ENCODE measurements at regions of chr9 and their contacts with region 1.

Region 1: GRCh38 chr9:121278535-121279261 is 10.7 kb downstream of the GSN start:
- DNase-seq: peak; percentile 67 to 85 (median 79)
- ATAC-seq: peak; percentile 59 to 64
- H3K4me3 ChIP-seq: no peak overlapping the region
- H3K27ac ChIP-seq: peak overlapping the region; percentile 81
- H3K4me1 ChIP-seq: peaks cover 38% of the 10 kb centered on the region
- H3K27me3 ChIP-seq: no peaks in the 10 kb centered on the region

Region 2: GRCh38 chr9:120830151-120830550 is 448.5 kb before region 1 on chr9:
- intact Hi-C with region 1: no loop called
- DNase-seq: no peak
- ATAC-seq: no peak
- H3K4me3 ChIP-seq: no peak overlapping the region
- H3K27ac ChIP-seq: no peak overlapping the region
- H3K4me1 ChIP-seq: no peaks in the 10 kb centered on the region
- H3K27me3 ChIP-seq: no peaks in the 10 kb centered on the region

Region 3: GRCh38 chr9:121321016-121321503 is 42.4 kb after region 1 on chr9:
- intact Hi-C with region 1: loop called in 2 of 4 experiments (anchors 2 to 5 kb)
- DNase-seq: peak in 2 of 3 donors; percentile 51 to 59
- ATAC-seq: peak in 1 of 2 donors; percentile 2
- H3K4me3 ChIP-seq: no peak overlapping the region
- H3K27ac ChIP-seq: peak overlapping the region; percentile 47
- H3K4me1 ChIP-seq: peaks cover 12% of the 10 kb centered on the region
- H3K27me3 ChIP-seq: no peaks in the 10 kb centered on the region

Region 4: DNA sequence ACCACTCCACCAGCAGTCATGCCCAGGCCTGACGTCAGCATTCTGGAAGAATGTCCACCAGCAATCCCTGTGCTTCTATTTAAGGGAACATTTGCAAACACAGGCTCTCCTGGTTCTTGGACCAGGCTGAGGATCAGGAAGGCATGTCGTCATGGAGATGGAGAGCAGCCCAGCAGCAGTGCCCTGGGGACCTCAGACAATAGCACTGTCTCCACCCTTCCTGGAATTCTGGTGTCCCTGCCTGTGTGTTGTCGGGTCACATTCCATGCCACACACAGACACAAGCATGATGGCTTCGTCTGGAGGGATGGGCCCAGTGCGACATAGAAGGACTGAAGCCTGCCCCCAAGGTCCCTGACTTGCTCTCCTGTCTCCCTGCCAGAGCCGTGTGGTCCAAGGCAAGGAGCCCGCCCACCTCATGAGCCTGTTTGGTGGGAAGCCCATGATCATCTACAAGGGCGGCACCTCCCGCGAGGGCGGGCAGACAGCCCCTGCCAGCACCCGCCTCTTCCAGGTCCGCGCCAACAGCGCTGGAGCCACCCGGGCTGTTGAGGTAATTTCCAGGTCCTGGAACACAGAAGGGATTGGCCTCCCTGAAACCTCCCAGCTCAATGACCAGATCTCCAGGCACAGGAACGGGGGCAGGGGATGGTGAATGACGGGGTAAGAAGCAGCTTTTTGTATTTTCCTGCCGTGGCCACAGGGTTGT is 47.6 kb after region 1 on chr9:
- intact Hi-C with region 1: loop called in 2 of 4 experiments (anchors 2 to 5 kb)
- DNase-seq: peak; percentile 94 to 96 (median 95)
- ATAC-seq: peak; percentile 90 to 91
- H3K4me3 ChIP-seq: no peak overlapping the region
- H3K27ac ChIP-seq: peak overlapping the region; percentile 94
- H3K4me1 ChIP-seq: peaks cover 14% of the 10 kb centered on the region
- H3K27me3 ChIP-seq: no peaks in the 10 kb centered on the region

Region 5: DNA sequence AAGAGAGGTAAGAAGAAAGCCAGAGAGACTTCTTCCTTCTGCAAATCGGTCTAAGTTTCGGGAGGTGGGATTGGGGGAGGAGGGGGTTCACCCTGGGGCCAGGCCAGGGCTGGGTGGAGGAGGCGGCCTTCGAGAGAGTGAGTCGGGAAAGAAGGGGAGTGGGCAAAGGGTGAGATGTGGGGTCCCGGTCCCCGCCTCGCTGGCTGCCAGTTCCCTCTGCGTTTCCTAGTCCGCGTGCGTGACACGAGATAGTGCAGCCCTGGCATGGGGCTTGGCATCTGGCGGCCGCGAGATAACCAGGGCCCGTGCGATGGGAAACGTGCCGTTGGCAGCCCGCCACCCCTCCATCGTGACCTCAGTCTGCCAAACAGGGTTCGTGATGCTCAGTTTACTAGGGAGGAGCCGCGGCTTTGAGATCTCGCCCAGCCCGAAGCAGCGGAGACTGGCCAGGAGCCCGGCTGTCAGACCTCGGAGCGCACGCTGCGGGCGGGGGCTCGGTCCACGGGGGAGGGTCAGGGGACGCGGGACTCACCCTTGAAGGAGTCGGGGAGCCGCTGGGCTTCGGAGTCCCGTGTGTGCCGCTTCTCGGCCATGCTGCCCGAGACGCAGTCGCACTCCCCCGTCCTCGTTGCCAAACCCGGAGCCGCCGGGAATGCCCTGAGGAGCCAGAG is 91.0 kb after region 1 on chr9 and contains the start of gene STOM:
- intact Hi-C with region 1: loop called in 1 of 4 experiments (anchors 5 kb)
- DNase-seq: peak; percentile 93 to 97 (median 96)
- ATAC-seq: peak; percentile 84 to 85
- H3K4me3 ChIP-seq: peak within 1 kb of the TSS; percentile 65
- H3K27ac ChIP-seq: peak within 1 kb of the TSS; percentile 86
- H3K4me1 ChIP-seq: peaks cover 3% of the 10 kb centered on the region
- H3K27me3 ChIP-seq: no peaks in the 10 kb centered on the region
- total RNA-seq, gene STOM: 146 to 246 (median 172) TPM